Dendritic cell treated with granulocyte-macrophage colony-stimulating factor and Interleukin-4, amounts not matched to agents 40 ng/mL and 50 ng/mL, for 4 days (primary cell): ENCODE measurements at regions of chr12 and their contacts with region 1.

Region 1: GRCh38 chr12:54126696-54127537 is 61.9 kb downstream of the SMUG1 start:
- H3K4me3 Mint-ChIP-seq: peak overlapping the region; percentile 77
- H3K27ac Mint-ChIP-seq: peak overlapping the region; percentile 71
- H3K4me1 Mint-ChIP-seq: peaks cover 66% of the 10 kb centered on the region
- H3K27me3 Mint-ChIP-seq: peaks cover 71% of the 10 kb centered on the region

Region 2: GRCh38 chr12:54032627-54033100 is 94.3 kb before region 1 on chr12 and contains the start of gene HOXC5:
- intact Hi-C with region 1: loop called (anchors 5 kb)
- H3K4me3 Mint-ChIP-seq: no peak within 1 kb of the TSS
- H3K27ac Mint-ChIP-seq: no peak within 1 kb of the TSS
- H3K4me1 Mint-ChIP-seq: peaks cover 15% of the 10 kb centered on the region
- H3K27me3 Mint-ChIP-seq: peaks cover 93% of the 10 kb centered on the region